ENCODE measurements at regions of chr18 and their contacts with region 1.

Region 1: DNA sequence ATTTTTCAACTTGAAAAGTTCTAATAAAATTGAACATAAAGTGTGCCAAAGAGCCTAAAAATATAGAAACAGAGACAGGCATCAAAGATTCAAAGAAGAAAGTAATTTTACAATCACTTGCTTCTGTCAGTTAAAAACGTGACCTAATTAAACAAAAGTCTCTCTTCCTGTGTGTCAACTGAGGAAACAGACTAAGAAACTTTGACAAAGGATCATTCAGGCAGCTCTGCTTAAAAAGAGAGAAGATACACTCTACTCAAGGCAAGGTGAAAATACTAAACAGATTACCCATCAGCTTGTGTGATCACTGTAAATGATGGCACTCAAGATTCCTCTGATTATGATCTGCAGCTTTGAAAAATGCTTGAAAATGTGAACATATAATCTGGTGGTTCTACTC is 47.8 kb downstream of the DYM start:
- DNase-seq: no peak
- ATAC-seq: no peak

Region 2: DNA sequence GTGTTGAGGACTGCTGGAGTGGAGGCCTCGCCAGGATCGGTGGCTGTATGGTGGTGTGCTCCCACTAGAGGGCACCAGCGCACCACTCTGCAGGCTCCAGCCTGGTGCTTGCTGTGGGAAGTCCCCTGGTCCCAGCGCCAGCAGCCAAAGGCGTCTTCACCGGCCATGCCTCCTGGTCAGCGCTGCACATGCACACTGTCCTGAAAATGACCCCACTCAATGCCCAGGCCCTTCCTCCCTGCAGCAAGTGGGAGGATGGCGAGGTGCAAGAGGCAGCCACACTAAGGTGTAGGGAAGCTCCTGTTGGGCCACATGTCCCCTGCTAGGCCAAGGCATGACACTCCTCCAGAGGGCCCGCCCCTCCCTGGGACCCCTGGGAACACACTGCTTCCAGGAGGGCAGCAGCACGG is 737.3 kb before region 1 on chr18:
- intact Hi-C with region 1: loop called (anchors 10 kb)
- DNase-seq: peak; percentile 91
- ATAC-seq: peak; percentile 93